CD4-positive, alpha-beta T cell (primary cell): ENCODE measurements at regions of chr12 and their contacts with region 1.

Region 1: GRCh38 chr12:6890789-6891645 is 13.6 kb upstream of the LRRC23 start:
- DNase-seq: peak; percentile 96 to 100 (median 99)
- ATAC-seq: peak; percentile 95
- H3K4me3 ChIP-seq: peak overlapping the region; percentile 65
- H3K4me3 Mint-ChIP-seq: peak overlapping the region; percentile 88
- H3K27ac ChIP-seq: peak overlapping the region; percentile 84 to 92
- H3K27ac Mint-ChIP-seq: peak overlapping the region; percentile 92
- H3K4me1 ChIP-seq: peaks cover 18% of the 10 kb centered on the region
- H3K4me1 Mint-ChIP-seq: peaks cover 13% of the 10 kb centered on the region
- H3K27me3 ChIP-seq: no peaks in the 10 kb centered on the region
- H3K27me3 Mint-ChIP-seq: no peaks in the 10 kb centered on the region
- CTCF ChIP-seq: peak; percentile 76

Region 2: GRCh38 chr12:6553051-6553868 is 337.8 kb before region 1 on chr12:
- CTCF ChIA-PET with region 1: no interaction called
- POLR2A ChIA-PET with region 1: no interaction called
- intact Hi-C with region 1: no loop called
- DNase-seq: no peak
- ATAC-seq: no peak
- H3K4me3 ChIP-seq: no peak overlapping the region
- H3K4me3 Mint-ChIP-seq: peak overlapping the region; percentile 70
- H3K27ac ChIP-seq: no peak overlapping the region
- H3K27ac Mint-ChIP-seq: peak overlapping the region; percentile 26
- H3K4me1 ChIP-seq: peaks cover 83% of the 10 kb centered on the region
- H3K4me1 Mint-ChIP-seq: peaks cover 49% of the 10 kb centered on the region
- H3K27me3 ChIP-seq: no peaks in the 10 kb centered on the region
- H3K27me3 Mint-ChIP-seq: no peaks in the 10 kb centered on the region
- CTCF ChIP-seq: no peak

Region 3: DNA sequence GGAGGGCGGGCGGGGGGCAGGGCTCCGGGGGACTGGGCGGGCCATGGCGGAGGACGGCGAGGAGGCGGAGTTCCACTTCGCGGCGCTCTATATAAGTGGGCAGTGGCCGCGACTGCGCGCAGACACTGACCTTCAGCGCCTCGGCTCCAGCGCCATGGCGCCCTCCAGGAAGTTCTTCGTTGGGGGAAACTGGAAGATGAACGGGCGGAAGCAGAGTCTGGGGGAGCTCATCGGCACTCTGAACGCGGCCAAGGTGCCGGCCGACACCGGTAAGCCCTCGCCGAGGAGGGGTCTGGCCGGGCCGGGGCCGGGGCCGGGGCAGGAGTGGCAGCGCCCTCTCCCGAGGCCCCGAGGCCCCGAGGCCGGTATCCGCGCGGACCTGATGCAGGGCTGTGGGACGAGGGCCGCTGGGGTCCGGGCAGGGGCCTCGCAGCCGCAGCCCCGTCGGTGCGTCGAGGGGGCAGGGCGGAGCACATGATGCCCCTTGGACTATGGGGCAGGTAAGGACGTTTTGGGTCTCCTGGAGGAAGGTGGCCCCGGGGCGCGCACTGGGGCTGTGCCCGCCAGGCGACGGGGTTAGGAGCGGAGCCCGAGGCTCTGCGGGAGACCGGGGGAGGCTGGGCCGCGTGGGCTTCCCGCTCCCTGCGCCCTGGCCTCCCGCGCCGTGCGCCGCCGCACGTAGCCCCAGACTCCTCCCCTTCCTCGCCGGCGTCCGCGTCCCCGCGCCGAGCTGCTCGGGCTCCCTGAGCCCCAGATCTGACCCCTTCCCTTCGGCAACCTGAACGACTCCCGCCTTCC is 23.4 kb before region 1 on chr12 and contains the start of gene TPI1:
- CTCF ChIA-PET with region 1: interaction called, 153 read pairs
- POLR2A ChIA-PET with region 1: interaction called, 71 read pairs
- intact Hi-C with region 1: no loop called
- DNase-seq: peak; percentile 55 to 88 (median 72)
- ATAC-seq: peak; percentile 64
- H3K4me3 ChIP-seq: peak within 1 kb of the TSS; percentile 68
- H3K4me3 Mint-ChIP-seq: peak within 1 kb of the TSS; percentile 94
- H3K27ac ChIP-seq: peak within 1 kb of the TSS; percentile 73 to 78
- H3K27ac Mint-ChIP-seq: peak within 1 kb of the TSS; percentile 80
- H3K4me1 ChIP-seq: peaks cover 53% of the 10 kb centered on the region
- H3K4me1 Mint-ChIP-seq: peaks cover 56% of the 10 kb centered on the region
- H3K27me3 ChIP-seq: no peaks in the 10 kb centered on the region
- H3K27me3 Mint-ChIP-seq: no peaks in the 10 kb centered on the region
- CTCF ChIP-seq: no peak
- total RNA-seq, gene TPI1: 46.8 to 48.7 TPM

Region 4: DNA sequence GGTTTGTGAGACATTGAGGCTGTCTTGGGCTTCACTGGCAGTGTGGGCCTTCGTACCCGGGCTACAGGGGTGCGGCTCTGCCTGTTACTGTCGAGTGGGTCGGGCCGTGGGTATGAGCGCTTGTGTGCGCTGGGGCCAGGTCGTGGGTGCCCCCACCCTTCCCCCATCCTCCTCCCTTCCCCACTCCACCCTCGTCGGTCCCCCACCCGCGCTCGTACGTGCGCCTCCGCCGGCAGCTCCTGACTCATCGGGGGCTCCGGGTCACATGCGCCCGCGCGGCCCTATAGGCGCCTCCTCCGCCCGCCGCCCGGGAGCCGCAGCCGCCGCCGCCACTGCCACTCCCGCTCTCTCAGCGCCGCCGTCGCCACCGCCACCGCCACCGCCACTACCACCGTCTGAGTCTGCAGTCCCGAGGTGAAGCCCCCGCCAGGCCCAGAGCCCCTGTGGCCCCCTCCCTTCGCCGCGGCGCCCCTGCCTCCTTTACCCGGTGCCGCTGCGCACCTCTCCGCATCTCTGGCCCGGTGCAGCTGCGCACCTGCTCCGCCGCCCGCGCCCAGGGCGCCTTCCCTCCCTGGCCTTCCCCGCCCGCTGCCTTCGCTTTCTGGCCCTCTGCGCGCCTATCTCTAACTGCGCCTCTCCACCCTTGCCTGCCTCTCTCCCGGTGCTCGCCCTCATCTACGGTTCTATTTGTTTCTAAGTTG is 23.4 kb after region 1 on chr12 and contains the start of gene ENO2:
- CTCF ChIA-PET with region 1: interaction called, 36 read pairs
- POLR2A ChIA-PET with region 1: interaction called, 23 read pairs
- intact Hi-C with region 1: no loop called
- DNase-seq: peak; percentile 72 to 93 (median 86)
- ATAC-seq: peak; percentile 93
- H3K4me3 ChIP-seq: peak within 1 kb of the TSS; percentile 65
- H3K4me3 Mint-ChIP-seq: peak within 1 kb of the TSS; percentile 94
- H3K27ac ChIP-seq: peak within 1 kb of the TSS; percentile 84 to 90
- H3K27ac Mint-ChIP-seq: peak within 1 kb of the TSS; percentile 82
- H3K4me1 ChIP-seq: peaks cover 32% of the 10 kb centered on the region
- H3K4me1 Mint-ChIP-seq: peaks cover 31% of the 10 kb centered on the region
- H3K27me3 ChIP-seq: no peaks in the 10 kb centered on the region
- H3K27me3 Mint-ChIP-seq: no peaks in the 10 kb centered on the region
- CTCF ChIP-seq: no peak
- total RNA-seq, gene ENO2: 85.6 to 103 TPM

Region 5: DNA sequence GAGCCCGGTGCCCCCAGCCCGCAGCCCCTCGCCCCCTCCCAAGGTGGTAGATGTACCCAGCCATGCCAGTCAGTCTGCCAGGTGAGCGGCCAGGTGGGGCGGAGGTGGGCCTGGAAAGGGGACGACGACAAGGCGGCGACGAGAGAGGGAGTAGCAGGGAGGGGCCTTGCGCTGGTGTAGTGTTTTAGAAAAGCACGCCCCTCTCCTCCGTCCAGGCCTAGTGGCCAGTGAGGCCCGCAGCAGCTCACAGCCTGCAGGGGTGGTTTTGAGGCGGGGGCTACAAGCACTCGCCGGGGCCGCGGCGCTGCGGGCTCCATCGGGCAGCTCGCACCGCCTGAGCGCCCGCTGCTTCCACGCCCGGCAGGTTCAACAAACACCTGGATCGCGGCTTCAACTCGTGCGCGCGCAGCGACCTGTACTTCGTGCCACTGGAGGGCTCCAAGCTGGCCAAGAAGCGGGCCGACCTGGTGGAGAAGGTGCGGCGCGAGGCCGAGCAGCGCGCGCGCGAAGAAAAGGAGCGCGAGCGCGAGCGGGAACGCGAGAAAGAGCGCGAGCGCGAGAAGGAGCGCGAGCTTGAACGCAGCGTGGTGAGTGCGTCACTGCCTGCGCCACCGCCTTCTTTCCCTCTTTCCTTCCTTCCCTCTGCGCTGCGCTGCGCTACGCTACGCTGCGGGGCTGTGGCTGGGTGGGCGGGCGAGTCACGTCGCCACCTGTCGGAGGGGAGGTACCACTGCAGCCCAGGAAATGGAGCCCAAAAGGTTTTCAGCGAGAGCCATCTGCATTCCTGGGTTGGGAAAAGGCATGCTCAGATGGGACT is 46.7 kb after region 1 on chr12:
- CTCF ChIA-PET with region 1: interaction called, 10 read pairs
- POLR2A ChIA-PET with region 1: interaction called, 24 read pairs
- intact Hi-C with region 1: no loop called
- DNase-seq: peak; percentile 86 to 99 (median 92)
- ATAC-seq: peak; percentile 91
- H3K4me3 ChIP-seq: peak overlapping the region; percentile 72
- H3K4me3 Mint-ChIP-seq: peak overlapping the region; percentile 90
- H3K27ac ChIP-seq: peak overlapping the region; percentile 89 to 92
- H3K27ac Mint-ChIP-seq: peak overlapping the region; percentile 95
- H3K4me1 ChIP-seq: peaks cover 47% of the 10 kb centered on the region
- H3K4me1 Mint-ChIP-seq: peaks cover 61% of the 10 kb centered on the region
- H3K27me3 ChIP-seq: no peaks in the 10 kb centered on the region
- H3K27me3 Mint-ChIP-seq: no peaks in the 10 kb centered on the region
- CTCF ChIP-seq: peak; percentile 89

Region 6: GRCh38 chr12:6965026-6965661 is 74.1 kb after region 1 on chr12:
- CTCF ChIA-PET with region 1: interaction called, 13 read pairs
- POLR2A ChIA-PET with region 1: interaction called, 3 read pairs
- intact Hi-C with region 1: no loop called
- DNase-seq: peak; percentile 83 to 96 (median 86)
- ATAC-seq: peak; percentile 50
- H3K4me3 ChIP-seq: no peak overlapping the region
- H3K4me3 Mint-ChIP-seq: peak overlapping the region; percentile 79
- H3K27ac ChIP-seq: peak overlapping the region; percentile 38 to 39
- H3K27ac Mint-ChIP-seq: peak overlapping the region; percentile 90
- H3K4me1 ChIP-seq: peaks cover 70% of the 10 kb centered on the region
- H3K4me1 Mint-ChIP-seq: peaks cover 58% of the 10 kb centered on the region
- H3K27me3 ChIP-seq: no peaks in the 10 kb centered on the region
- H3K27me3 Mint-ChIP-seq: no peaks in the 10 kb centered on the region
- CTCF ChIP-seq: peak; percentile 94

Region 7: DNA sequence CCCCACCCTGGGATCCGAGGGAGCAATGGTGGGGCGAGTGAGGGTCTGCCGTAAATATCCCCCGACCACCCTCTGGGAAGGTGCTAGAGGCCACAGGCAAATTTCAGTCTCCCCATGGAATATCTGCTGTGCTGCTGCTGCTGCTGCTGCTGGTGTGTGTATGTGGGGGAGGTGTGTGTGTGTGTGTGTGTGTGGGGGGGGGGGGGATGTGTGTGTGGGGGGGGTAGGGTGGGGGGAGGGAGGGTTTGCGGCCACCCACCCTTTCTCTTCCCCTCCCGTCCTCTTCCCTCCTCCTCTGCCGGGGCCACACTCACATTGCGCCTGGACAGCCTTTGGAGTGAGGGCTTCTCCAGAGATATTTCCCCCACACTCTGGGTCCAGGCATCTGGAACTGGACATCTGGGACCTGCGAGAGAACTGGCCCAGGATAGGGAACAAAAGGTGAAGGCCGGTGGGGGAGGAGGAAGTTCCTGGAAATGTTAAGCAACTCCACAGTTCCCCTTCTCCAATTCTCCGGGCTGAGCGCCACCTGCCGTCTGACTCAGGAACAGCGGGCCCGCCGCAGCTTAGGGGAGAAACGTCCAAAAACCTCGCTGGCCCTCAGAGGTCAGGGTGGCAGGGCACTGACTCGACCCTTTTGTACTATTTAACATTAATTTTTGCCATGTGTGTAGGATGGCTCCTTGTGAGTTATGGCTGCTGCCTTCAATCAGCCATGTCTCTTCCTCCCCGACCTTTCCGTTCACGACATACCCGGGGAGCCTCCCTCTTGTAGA is 218.0 kb after region 1 on chr12 and contains the start of gene C1RL:
- CTCF ChIA-PET with region 1: interaction called, 11 read pairs
- POLR2A ChIA-PET with region 1: interaction called, 7 read pairs
- intact Hi-C with region 1: no loop called
- DNase-seq: peak; percentile 55 to 85 (median 76)
- ATAC-seq: peak; percentile 48
- H3K4me3 ChIP-seq: peak within 1 kb of the TSS; percentile 70
- H3K4me3 Mint-ChIP-seq: peak within 1 kb of the TSS; percentile 93
- H3K27ac ChIP-seq: peak within 1 kb of the TSS; percentile 79 to 80
- H3K27ac Mint-ChIP-seq: peak within 1 kb of the TSS; percentile 93
- H3K4me1 ChIP-seq: peaks cover 43% of the 10 kb centered on the region
- H3K4me1 Mint-ChIP-seq: peaks cover 46% of the 10 kb centered on the region
- H3K27me3 ChIP-seq: no peaks in the 10 kb centered on the region
- H3K27me3 Mint-ChIP-seq: no peaks in the 10 kb centered on the region
- CTCF ChIP-seq: peak; percentile 95
- total RNA-seq, gene C1RL: 12.2 to 14.1 TPM